K562 (cell line): ENCODE measurements at regions of chr4 and their contacts with region 1.

Region 1: DNA sequence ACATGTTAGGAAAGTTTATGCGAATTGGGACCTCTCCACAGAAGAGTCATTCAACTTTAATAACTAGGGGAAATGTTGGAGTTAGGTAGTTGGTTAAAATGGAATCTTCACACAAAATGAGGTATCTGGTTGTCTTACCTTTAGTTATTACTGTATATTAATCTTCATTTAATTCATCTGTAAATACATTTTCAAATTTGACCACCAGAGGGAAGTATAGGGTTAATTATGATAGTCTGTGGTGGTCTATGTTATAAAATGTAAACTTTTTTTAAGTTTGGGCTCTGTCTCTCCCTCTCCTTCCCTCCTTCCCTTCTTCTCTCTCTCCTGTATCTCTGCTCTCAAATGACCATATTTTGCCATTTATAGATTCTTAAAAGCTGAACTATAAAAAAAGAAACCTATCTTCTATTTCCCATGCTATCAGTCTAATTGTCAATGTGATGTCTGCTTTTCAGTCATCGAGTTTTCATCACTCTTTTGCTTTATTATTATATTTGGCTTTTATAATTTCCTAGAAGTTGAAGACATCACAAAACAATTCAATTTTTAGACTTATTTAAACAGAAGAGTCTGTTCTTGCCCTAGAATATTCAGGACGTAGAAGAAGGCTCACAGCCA is 49.8 kb downstream of the TMEM144 start:
- DNase-seq: peak in 1 of 4 experiments; percentile 34
- ATAC-seq: peak; percentile 77
- H3K4me3 ChIP-seq: no peak overlapping the region
- H3K27ac ChIP-seq: no peak overlapping the region
- H3K4me1 ChIP-seq: no peaks in the 10 kb centered on the region
- H3K27me3 ChIP-seq: no peaks in the 10 kb centered on the region
- CTCF ChIP-seq: peak in 2 of 3 experiments; percentile 20 to 61; a peak in 3 of 6 replicates
- EP300 ChIP-seq: no peak
- POLR2A ChIP-seq: no peak
- RAD21 ChIP-seq: peak; percentile 73 to 79

Region 2: DNA sequence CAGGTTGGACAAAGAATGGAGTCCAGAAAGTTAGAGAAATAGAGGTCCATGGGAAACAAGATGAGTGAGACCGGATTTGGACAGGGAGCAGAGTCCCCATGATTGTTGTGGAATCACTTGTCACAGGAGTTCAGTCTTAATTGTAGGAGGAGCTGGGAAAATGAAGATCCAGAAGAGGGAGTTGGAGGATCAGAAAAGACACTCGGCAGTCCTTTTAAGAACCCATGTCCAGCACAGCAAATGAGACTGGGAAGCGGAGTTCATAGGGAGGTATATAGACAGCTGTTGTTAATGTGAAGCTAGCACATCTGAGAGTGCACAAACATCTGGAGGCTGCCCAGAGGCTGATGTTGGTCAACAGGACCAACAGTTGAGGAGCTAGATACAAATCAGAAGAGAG is 150.2 kb after region 1 on chr4:
- CTCF ChIA-PET with region 1: no interaction called
- POLR2A ChIA-PET with region 1: no interaction called
- in situ Hi-C with region 1: no loop called
- intact Hi-C with region 1: loop called (anchors 10 kb)
- DNase-seq: peak in 1 of 4 experiments; percentile 13
- ATAC-seq: peak; percentile 67
- H3K4me3 ChIP-seq: no peak overlapping the region
- H3K27ac ChIP-seq: no peak overlapping the region
- H3K4me1 ChIP-seq: peaks cover 0 to 5% of the 10 kb centered on the region in 2 experiments; a peak in 1 of 5 replicates
- H3K27me3 ChIP-seq: no peaks in the 10 kb centered on the region
- CTCF ChIP-seq: peak in 2 of 3 experiments; percentile 27 to 46; a peak in 2 of 6 replicates
- EP300 ChIP-seq: no peak
- POLR2A ChIP-seq: no peak
- RAD21 ChIP-seq: peak; percentile 35 to 50

Region 3: DNA sequence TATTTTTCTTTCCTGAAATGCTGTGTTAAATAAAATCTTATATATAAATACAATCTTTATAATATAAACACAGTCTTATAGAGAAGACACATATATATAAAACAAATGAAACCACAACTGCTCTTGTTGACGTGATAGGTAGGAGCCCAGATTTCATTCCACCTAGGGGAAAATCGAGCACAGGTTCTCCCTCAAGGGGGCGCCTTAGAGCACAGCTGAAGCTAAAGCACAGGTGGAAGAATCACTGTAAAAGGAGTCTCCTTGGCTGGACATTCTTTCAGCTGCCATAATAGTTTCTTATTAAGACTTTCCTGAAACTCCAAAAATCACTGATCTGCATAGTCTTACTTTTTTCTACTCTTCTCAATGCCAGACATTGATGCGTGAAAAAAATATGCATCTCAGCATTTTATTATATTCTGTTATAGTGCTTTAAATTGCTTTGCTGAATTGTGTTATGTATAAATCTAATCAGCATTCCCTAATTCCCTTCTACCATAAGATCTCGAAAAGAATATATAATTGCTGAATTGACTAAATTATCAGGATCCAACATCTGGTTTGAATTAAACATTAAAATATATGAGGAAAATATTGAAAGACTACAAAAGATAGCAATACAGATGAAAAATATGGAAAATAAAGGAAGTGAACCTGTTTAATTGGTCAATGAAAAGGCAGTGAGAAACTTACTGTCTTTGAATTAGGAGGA is 236.1 kb after region 1 on chr4:
- CTCF ChIA-PET with region 1: no interaction called
- POLR2A ChIA-PET with region 1: no interaction called
- in situ Hi-C with region 1: no loop called
- intact Hi-C with region 1: loop called (anchors 5 kb)
- DNase-seq: peak; percentile 26 to 62 (median 36)
- ATAC-seq: peak; percentile 72; the same call in 2 of the 3 replicates
- H3K4me3 ChIP-seq: no peak overlapping the region
- H3K27ac ChIP-seq: no peak overlapping the region
- H3K4me1 ChIP-seq: no peaks in the 10 kb centered on the region
- H3K27me3 ChIP-seq: no peaks in the 10 kb centered on the region; a peak in 1 of 5 replicates
- CTCF ChIP-seq: peak; percentile 48 to 70 (median 66); a peak in 5 of 6 replicates
- EP300 ChIP-seq: no peak
- POLR2A ChIP-seq: no peak
- RAD21 ChIP-seq: peak; percentile 37 to 61; a peak in 3 of 4 replicates

Region 4: GRCh38 chr4:158850800-158851644 is 591.0 kb after region 1 on chr4:
- CTCF ChIA-PET with region 1: interaction called, 14 read pairs
- POLR2A ChIA-PET with region 1: no interaction called
- in situ Hi-C with region 1: no loop called
- intact Hi-C with region 1: loop called (anchors 5 kb)
- DNase-seq: peak; percentile 24 to 38 (median 32)
- ATAC-seq: peak; percentile 45; the same call in 1 of the 3 replicates
- H3K4me3 ChIP-seq: no peak overlapping the region
- H3K27ac ChIP-seq: no peak overlapping the region
- H3K4me1 ChIP-seq: no peaks in the 10 kb centered on the region; a peak in 1 of 5 replicates
- H3K27me3 ChIP-seq: no peaks in the 10 kb centered on the region
- CTCF ChIP-seq: peak; percentile 37 to 69 (median 52); a peak in 4 of 6 replicates
- EP300 ChIP-seq: no peak
- POLR2A ChIP-seq: no peak
- RAD21 ChIP-seq: peak; percentile 71 to 81

Region 5: DNA sequence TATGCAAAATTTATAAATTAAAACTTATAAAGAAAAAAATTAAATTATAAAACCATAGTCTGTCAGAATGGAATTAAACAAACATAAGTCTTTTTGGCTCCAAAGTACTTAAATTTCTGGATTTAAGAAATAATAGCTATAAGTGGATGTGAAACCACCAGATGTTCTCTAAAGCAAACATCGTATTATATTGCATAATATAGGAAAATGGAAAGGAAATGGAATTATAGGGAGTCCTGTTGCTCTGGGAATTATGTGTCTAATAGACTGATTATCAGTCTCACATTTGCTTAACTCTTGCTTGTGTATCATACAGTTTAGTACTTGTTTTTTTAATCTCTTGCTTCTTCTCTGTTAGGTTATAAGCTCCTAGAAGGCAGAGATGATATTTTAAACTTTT is 1662.1 kb after region 1 on chr4:
- CTCF ChIA-PET with region 1: no interaction called
- POLR2A ChIA-PET with region 1: no interaction called
- in situ Hi-C with region 1: no loop called
- intact Hi-C with region 1: no loop called
- DNase-seq: no peak
- ATAC-seq: no peak
- H3K4me3 ChIP-seq: no peak overlapping the region
- H3K27ac ChIP-seq: no peak overlapping the region
- H3K4me1 ChIP-seq: no peaks in the 10 kb centered on the region
- H3K27me3 ChIP-seq: no peaks in the 10 kb centered on the region
- CTCF ChIP-seq: no peak
- EP300 ChIP-seq: no peak
- POLR2A ChIP-seq: no peak
- RAD21 ChIP-seq: no peak